ENCODE measurements at regions of chrX and their contacts with region 1.

Region 1: GRCh38 chrX:68196939-68197791 is 236.1 kb downstream of the OPHN1 start:
- DNase-seq: peak; percentile 83
- ATAC-seq: peak; percentile 69
- H3K4me3 ChIP-seq: no peak overlapping the region
- H3K27ac ChIP-seq: no peak overlapping the region
- H3K4me1 ChIP-seq: peaks cover 16% of the 10 kb centered on the region
- H3K27me3 ChIP-seq: no peaks in the 10 kb centered on the region
- CTCF ChIP-seq: peak; percentile 83

Region 2: GRCh38 chrX:67961516-67961915 is 235.6 kb before region 1 on chrX:
- CTCF ChIA-PET with region 1: no interaction called
- POLR2A ChIA-PET with region 1: no interaction called
- intact Hi-C with region 1: no loop called
- DNase-seq: no peak
- ATAC-seq: no peak
- H3K4me3 ChIP-seq: no peak overlapping the region
- H3K27ac ChIP-seq: no peak overlapping the region
- H3K4me1 ChIP-seq: no peaks in the 10 kb centered on the region
- H3K27me3 ChIP-seq: no peaks in the 10 kb centered on the region
- CTCF ChIP-seq: no peak

Region 3: GRCh38 chrX:68084765-68085164 is 112.4 kb before region 1 on chrX:
- CTCF ChIA-PET with region 1: no interaction called
- POLR2A ChIA-PET with region 1: no interaction called
- intact Hi-C with region 1: no loop called
- DNase-seq: no peak
- ATAC-seq: no peak
- H3K4me3 ChIP-seq: no peak overlapping the region
- H3K27ac ChIP-seq: no peak overlapping the region
- H3K4me1 ChIP-seq: no peaks in the 10 kb centered on the region
- H3K27me3 ChIP-seq: no peaks in the 10 kb centered on the region
- CTCF ChIP-seq: no peak

Region 4: DNA sequence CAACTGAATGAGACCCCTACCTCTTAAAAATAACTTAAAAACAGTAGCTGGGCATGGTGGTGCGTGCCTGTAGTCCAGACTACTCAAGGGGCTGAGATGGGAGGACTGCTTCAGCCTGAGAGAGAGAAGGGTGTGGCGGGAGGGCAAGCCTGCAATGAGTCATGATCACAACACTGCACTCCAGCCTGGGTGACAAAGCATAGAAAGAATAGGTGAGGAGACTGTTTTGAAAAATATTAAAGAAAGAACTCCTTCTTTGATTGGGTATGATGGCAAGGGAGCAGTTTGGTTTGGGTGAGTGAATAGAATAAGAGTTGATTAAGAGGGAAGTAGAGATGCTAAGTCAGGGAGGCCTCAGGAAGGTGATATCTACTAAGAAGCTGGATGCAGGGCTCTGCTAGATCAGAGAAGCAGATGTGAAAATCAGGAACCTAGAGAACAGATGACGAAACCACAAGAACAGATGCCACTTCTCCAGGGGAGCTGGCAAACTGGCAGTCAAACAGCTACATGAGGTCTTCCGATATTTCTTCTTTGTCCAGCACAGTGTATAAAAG is 82.5 kb before region 1 on chrX:
- CTCF ChIA-PET with region 1: no interaction called
- POLR2A ChIA-PET with region 1: no interaction called
- intact Hi-C with region 1: no loop called
- DNase-seq: peak; percentile 59
- ATAC-seq: peak; percentile 94
- H3K4me3 ChIP-seq: no peak overlapping the region
- H3K27ac ChIP-seq: peak overlapping the region; percentile 32
- H3K4me1 ChIP-seq: peaks cover 14% of the 10 kb centered on the region
- H3K27me3 ChIP-seq: no peaks in the 10 kb centered on the region
- CTCF ChIP-seq: no peak

Region 5: GRCh38 chrX:68252664-68253063 is 55.5 kb after region 1 on chrX:
- CTCF ChIA-PET with region 1: no interaction called
- POLR2A ChIA-PET with region 1: no interaction called
- intact Hi-C with region 1: loop called (anchors 10 kb)
- DNase-seq: no peak
- ATAC-seq: no peak
- H3K4me3 ChIP-seq: no peak overlapping the region
- H3K27ac ChIP-seq: no peak overlapping the region
- H3K4me1 ChIP-seq: peaks cover 24% of the 10 kb centered on the region
- H3K27me3 ChIP-seq: no peaks in the 10 kb centered on the region
- CTCF ChIP-seq: no peak

Region 6: DNA sequence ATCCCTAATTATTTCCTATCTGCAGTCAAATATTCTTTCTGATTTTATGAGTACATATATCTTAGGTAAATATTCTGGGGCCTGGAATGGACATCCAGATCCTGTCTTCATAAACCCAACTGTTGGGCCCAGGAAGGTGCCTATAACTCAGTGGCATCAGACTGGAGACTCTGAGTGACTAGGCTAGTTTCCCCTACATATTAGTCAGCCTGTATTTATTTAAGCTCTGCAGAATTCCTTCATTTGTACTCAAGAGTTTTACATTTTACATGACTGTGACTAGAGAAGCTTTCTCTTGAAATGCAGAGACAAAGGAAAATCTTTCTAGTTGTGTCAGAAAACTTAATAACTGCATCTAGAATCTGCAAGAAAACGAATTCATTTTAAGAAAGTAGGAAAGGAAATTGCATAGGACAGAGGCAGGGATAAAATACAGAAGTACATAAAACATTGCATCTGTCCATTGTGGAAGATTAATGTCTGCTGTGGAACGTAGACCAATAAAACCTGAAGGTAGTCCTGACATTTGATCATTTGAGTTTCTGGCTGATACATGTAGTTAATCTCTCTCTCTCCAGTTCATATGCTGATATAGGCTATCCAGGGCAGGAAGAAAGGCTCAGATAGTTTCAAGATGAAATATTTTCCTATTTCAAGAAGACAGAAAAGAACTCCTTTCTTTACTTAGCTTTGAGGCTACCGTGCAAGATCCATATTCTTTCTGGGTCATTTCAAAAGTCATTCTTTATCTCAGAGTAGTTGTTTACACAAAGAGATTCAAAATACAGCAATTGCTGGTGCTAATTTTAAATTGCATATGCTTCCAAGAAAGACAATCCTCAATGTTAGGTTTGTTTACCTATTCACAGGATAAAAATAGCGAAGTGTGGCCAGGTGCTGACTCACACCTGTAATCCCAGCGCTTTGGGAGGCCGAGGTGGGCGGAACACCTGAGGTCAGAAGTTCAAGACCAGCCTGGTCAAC is 158.0 kb after region 1 on chrX:
- CTCF ChIA-PET with region 1: no interaction called
- POLR2A ChIA-PET with region 1: no interaction called
- intact Hi-C with region 1: loop called (anchors 5 kb)
- DNase-seq: peak; percentile 54
- ATAC-seq: peak; percentile 91
- H3K4me3 ChIP-seq: no peak overlapping the region
- H3K27ac ChIP-seq: peak overlapping the region; percentile 82
- H3K4me1 ChIP-seq: peaks cover 18% of the 10 kb centered on the region
- H3K27me3 ChIP-seq: no peaks in the 10 kb centered on the region
- CTCF ChIP-seq: no peak

Region 7: GRCh38 chrX:68462653-68463052 is 265.5 kb after region 1 on chrX:
- CTCF ChIA-PET with region 1: interaction called, 3 read pairs
- POLR2A ChIA-PET with region 1: no interaction called
- intact Hi-C with region 1: loop called (anchors 1 kb)
- DNase-seq: peak; percentile 57
- ATAC-seq: peak; percentile 45
- H3K4me3 ChIP-seq: no peak overlapping the region
- H3K27ac ChIP-seq: peak overlapping the region; percentile 28
- H3K4me1 ChIP-seq: peaks cover 12% of the 10 kb centered on the region
- H3K27me3 ChIP-seq: no peaks in the 10 kb centered on the region
- CTCF ChIP-seq: peak; percentile 63

Region 8: GRCh38 chrX:68498508-68499379 is 301.6 kb after region 1 on chrX and contains the start of gene YIPF6:
- CTCF ChIA-PET with region 1: no interaction called
- POLR2A ChIA-PET with region 1: no interaction called
- intact Hi-C with region 1: loop called (anchors 2 kb)
- DNase-seq: peak; percentile 79
- ATAC-seq: peak; percentile 96
- H3K4me3 ChIP-seq: peak within 1 kb of the TSS; percentile 99
- H3K27ac ChIP-seq: peak within 1 kb of the TSS; percentile 94
- H3K4me1 ChIP-seq: peaks cover 16% of the 10 kb centered on the region; the same call in 1 of the 2 replicates
- H3K27me3 ChIP-seq: no peaks in the 10 kb centered on the region
- CTCF ChIP-seq: no peak
- total RNA-seq, gene YIPF6: 36.1 and 37.0 TPM in 2 replicates

Measured in PC-3 (cell line).